CD4-positive, alpha-beta memory T cell (primary cell): ENCODE measurements at regions of chr14 and their contacts with region 1.

Region 1: GRCh38 chr14:60331201-60332045 is 82.4 kb downstream of the PPM1A start:
- DNase-seq: peak; percentile 70 to 77 (median 75)
- H3K4me3 ChIP-seq: peak overlapping the region; percentile 58 to 84
- H3K4me3 Mint-ChIP-seq: peak overlapping the region; percentile 93 to 100 (median 98)
- H3K27ac ChIP-seq: peak overlapping the region; percentile 33
- H3K27ac Mint-ChIP-seq: peak overlapping the region; percentile 75 to 98 (median 95)
- H3K4me1 ChIP-seq: peaks cover 21% of the 10 kb centered on the region
- H3K4me1 Mint-ChIP-seq: peaks cover 19 to 33% (median 26%) of the 10 kb centered on the region in 4 donors
- H3K27me3 ChIP-seq: no peaks in the 10 kb centered on the region
- H3K27me3 Mint-ChIP-seq: peaks cover 9 to 42% of the 10 kb centered on the region in 2 donors

Region 2: DNA sequence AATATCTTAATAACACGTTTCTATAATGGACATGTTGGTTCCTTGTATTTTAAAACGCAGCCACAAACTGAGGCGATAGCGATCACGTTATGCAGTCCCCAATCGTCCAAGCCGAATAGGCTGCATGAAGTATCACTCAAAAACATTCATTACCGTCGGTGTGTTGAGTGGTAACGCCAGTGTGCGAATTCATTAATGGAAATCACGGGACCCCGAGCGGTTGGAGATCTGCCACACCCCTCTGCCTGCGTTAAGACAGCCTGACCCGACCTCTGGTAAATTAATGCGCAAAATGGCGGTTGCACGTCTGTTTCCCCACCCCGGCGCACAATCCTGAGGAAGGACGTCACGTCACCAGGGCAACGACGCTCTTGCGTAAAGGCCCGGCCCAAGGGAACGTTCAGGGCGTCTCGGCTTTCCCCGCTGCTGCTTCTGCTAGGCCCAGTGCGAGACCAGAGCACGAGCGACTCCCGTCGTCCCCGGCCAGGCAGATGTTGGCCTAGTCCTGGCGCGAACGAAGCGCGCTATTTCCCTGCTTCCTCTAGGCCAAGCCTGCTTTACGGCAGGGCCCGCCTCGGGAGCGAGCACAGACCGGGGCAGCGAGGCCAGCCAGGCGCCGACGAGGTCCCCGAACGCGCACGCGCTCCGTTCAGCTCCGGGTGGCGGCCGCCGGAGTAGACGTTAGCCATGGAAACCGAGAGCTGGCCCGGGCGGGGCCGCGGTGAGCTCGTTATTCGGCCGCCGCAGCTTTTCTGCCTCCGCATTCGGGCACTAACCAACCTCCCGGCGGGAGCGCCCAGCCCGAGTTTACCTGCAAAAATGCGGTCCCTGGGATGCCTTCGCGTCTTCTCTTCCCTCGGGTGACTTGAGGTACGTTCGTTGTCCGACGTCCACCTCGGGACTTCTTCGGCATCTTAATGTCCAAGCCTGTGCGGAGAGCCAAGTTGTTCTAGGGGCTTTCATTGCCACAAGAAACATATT is 239.6 kb before region 1 on chr14 and contains the start of gene PCNX4:
- CTCF ChIA-PET with region 1: no interaction called
- POLR2A ChIA-PET with region 1: interaction called, 4 read pairs
- intact Hi-C with region 1: loop called (anchors 1 kb)
- DNase-seq: peak; percentile 93 to 97 (median 96)
- H3K4me3 ChIP-seq: peak within 1 kb of the TSS; percentile 71 to 97
- H3K4me3 Mint-ChIP-seq: peak within 1 kb of the TSS; percentile 90 to 98 (median 92)
- H3K27ac ChIP-seq: peak within 1 kb of the TSS; percentile 99
- H3K27ac Mint-ChIP-seq: peak within 1 kb of the TSS; percentile 95 to 100 (median 97)
- H3K4me1 ChIP-seq: peaks cover 34% of the 10 kb centered on the region
- H3K4me1 Mint-ChIP-seq: peaks cover 27 to 55% (median 38%) of the 10 kb centered on the region in 4 donors
- H3K27me3 ChIP-seq: no peaks in the 10 kb centered on the region
- H3K27me3 Mint-ChIP-seq: no peaks in the 10 kb centered on the region
- total RNA-seq, gene PCNX4: 41.5 to 53.0 TPM

Region 3: DNA sequence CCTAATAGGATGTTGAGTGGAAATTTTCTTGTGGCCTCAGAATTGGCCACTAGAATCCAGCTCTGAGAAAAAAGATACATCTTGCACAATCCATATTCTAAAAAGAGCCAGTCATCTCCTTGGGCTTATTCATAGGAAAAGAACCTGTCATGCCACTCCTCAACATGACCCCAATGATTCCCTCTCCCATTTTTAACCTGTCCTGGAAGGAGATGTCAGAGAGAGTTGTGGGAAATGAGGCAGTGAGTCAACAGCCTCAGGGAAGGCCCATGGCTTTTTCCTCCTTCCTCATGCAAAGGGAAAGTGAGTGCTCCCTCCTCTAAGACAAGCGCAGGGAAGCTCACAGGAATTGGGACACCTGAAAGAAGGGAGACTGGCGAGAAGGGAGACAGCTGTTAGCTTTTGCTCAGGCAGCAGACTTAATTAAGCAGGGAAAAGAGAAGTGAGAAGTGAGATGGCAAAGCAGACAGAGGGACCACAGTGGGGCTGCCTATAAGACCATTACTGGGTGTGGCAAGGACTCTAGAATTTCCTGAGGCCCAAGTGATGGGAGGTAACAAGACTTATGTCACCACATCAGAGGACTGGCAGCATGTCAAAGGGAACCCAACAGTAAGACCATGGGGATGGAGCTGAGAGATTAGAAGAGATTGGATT is 156.0 kb before region 1 on chr14:
- CTCF ChIA-PET with region 1: no interaction called
- POLR2A ChIA-PET with region 1: no interaction called
- intact Hi-C with region 1: no loop called
- DNase-seq: no peak
- H3K4me3 ChIP-seq: no peak overlapping the region
- H3K4me3 Mint-ChIP-seq: no peak overlapping the region
- H3K27ac ChIP-seq: no peak overlapping the region
- H3K27ac Mint-ChIP-seq: peak overlapping the region in 2 of 7 donors; percentile 21 to 31
- H3K4me1 ChIP-seq: no peaks in the 10 kb centered on the region
- H3K4me1 Mint-ChIP-seq: no peaks in the 10 kb centered on the region
- H3K27me3 ChIP-seq: no peaks in the 10 kb centered on the region
- H3K27me3 Mint-ChIP-seq: peaks cover 5 to 7% of the 10 kb centered on the region in 2 donors

Region 4: DNA sequence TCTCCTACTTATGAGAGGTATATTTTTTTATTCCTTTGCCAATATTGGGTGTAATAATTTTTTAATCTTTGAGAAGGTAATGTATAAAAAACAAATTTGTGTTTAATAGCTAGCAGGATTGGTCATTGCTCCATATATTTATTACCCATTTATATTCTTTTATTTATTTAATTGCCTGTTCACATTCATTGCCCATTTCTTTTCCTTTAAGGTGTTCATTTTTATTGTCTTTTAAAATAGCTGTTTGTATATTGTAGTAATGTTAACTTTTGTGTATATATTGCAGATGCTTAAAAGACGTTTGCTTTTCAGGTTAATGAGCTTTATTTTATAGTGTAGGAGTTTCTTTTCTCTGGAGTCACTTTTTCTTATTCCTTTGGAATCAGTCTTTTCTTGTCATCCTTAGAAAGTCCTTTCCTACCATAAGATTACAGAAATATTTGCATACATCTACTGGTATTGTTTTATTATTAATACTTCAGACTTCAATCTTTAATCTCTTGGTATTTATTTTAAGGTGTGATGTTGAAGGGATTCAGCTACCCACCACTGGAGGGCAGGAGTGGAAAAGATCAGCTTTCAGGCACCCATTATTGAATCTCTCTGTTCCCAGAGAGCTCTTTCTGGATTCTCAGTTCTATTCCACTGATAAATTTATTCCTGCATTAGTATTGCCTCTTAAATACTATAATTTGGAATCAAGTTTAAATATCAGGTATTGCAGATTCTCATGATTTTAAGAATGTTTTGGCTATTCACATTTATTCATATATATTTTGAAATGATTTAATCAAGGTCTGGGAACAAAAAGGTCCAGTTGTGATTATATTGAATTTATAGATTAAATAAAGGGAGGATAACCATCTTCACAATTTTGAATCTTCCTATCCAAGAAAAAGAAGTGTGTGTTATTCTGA is 65.1 kb before region 1 on chr14:
- CTCF ChIA-PET with region 1: interaction called, 4 read pairs
- POLR2A ChIA-PET with region 1: no interaction called
- intact Hi-C with region 1: loop called (anchors 5 kb)
- DNase-seq: peak in 4 of 5 donors; percentile 16 to 31 (median 24)
- H3K4me3 ChIP-seq: no peak overlapping the region
- H3K4me3 Mint-ChIP-seq: no peak overlapping the region
- H3K27ac ChIP-seq: no peak overlapping the region
- H3K27ac Mint-ChIP-seq: no peak overlapping the region
- H3K4me1 ChIP-seq: peaks cover 8% of the 10 kb centered on the region
- H3K4me1 Mint-ChIP-seq: peaks cover 19 to 39% (median 34%) of the 10 kb centered on the region in 4 donors
- H3K27me3 ChIP-seq: no peaks in the 10 kb centered on the region
- H3K27me3 Mint-ChIP-seq: no peaks in the 10 kb centered on the region

Region 5: GRCh38 chr14:60309867-60310552 is 21.4 kb before region 1 on chr14:
- CTCF ChIA-PET with region 1: interaction called, 13 read pairs
- POLR2A ChIA-PET with region 1: no interaction called
- intact Hi-C with region 1: no loop called
- DNase-seq: no peak
- H3K4me3 ChIP-seq: no peak overlapping the region
- H3K4me3 Mint-ChIP-seq: no peak overlapping the region
- H3K27ac ChIP-seq: no peak overlapping the region
- H3K27ac Mint-ChIP-seq: no peak overlapping the region
- H3K4me1 ChIP-seq: no peaks in the 10 kb centered on the region
- H3K4me1 Mint-ChIP-seq: no peaks in the 10 kb centered on the region
- H3K27me3 ChIP-seq: no peaks in the 10 kb centered on the region
- H3K27me3 Mint-ChIP-seq: peaks cover 4 to 7% of the 10 kb centered on the region in 2 donors

Region 6: GRCh38 chr14:60381909-60382308 is 50.5 kb after region 1 on chr14:
- CTCF ChIA-PET with region 1: no interaction called
- POLR2A ChIA-PET with region 1: no interaction called
- intact Hi-C with region 1: no loop called
- DNase-seq: no peak
- H3K4me3 ChIP-seq: no peak overlapping the region
- H3K4me3 Mint-ChIP-seq: no peak overlapping the region
- H3K27ac ChIP-seq: no peak overlapping the region
- H3K27ac Mint-ChIP-seq: no peak overlapping the region
- H3K4me1 ChIP-seq: no peaks in the 10 kb centered on the region
- H3K4me1 Mint-ChIP-seq: no peaks in the 10 kb centered on the region
- H3K27me3 ChIP-seq: no peaks in the 10 kb centered on the region
- H3K27me3 Mint-ChIP-seq: peaks cover 15 to 24% of the 10 kb centered on the region in 2 donors

Region 7: GRCh38 chr14:60485598-60486251 is 154.3 kb after region 1 on chr14 and contains the start of gene C14orf39:
- CTCF ChIA-PET with region 1: no interaction called
- POLR2A ChIA-PET with region 1: no interaction called
- intact Hi-C with region 1: loop called (anchors 10 kb)
- DNase-seq: no peak
- H3K4me3 ChIP-seq: no peak within 1 kb of the TSS
- H3K4me3 Mint-ChIP-seq: peak within 1 kb of the TSS in 4 of 8 donors; percentile 7 to 52 (median 40)
- H3K27ac ChIP-seq: no peak within 1 kb of the TSS
- H3K27ac Mint-ChIP-seq: no peak within 1 kb of the TSS
- H3K4me1 ChIP-seq: no peaks in the 10 kb centered on the region
- H3K4me1 Mint-ChIP-seq: peaks cover 0 to 2% (median under 1%) of the 10 kb centered on the region in 4 donors
- H3K27me3 ChIP-seq: peaks cover 12% of the 10 kb centered on the region
- H3K27me3 Mint-ChIP-seq: peaks cover 15% of the 10 kb centered on the region in 2 donors
- total RNA-seq, gene C14orf39: not detected

Region 8: GRCh38 chr14:61252369-61253063 is 921.1 kb after region 1 on chr14:
- CTCF ChIA-PET with region 1: interaction called, 3 read pairs
- POLR2A ChIA-PET with region 1: no interaction called
- intact Hi-C with region 1: loop called (anchors 5 kb)
- DNase-seq: peak; percentile 49 to 69 (median 61)
- H3K4me3 ChIP-seq: no peak overlapping the region
- H3K4me3 Mint-ChIP-seq: no peak overlapping the region
- H3K27ac ChIP-seq: no peak overlapping the region
- H3K27ac Mint-ChIP-seq: peak overlapping the region in 1 of 7 donors; percentile 12
- H3K4me1 ChIP-seq: no peaks in the 10 kb centered on the region
- H3K4me1 Mint-ChIP-seq: peaks cover 0 to 3% (median under 1%) of the 10 kb centered on the region in 4 donors
- H3K27me3 ChIP-seq: peaks cover 3% of the 10 kb centered on the region
- H3K27me3 Mint-ChIP-seq: peaks cover 1 to 5% of the 10 kb centered on the region in 2 donors